AG04450 (cell line): ENCODE measurements at regions of chr22 and their contacts with region 1.

Region 1: DNA sequence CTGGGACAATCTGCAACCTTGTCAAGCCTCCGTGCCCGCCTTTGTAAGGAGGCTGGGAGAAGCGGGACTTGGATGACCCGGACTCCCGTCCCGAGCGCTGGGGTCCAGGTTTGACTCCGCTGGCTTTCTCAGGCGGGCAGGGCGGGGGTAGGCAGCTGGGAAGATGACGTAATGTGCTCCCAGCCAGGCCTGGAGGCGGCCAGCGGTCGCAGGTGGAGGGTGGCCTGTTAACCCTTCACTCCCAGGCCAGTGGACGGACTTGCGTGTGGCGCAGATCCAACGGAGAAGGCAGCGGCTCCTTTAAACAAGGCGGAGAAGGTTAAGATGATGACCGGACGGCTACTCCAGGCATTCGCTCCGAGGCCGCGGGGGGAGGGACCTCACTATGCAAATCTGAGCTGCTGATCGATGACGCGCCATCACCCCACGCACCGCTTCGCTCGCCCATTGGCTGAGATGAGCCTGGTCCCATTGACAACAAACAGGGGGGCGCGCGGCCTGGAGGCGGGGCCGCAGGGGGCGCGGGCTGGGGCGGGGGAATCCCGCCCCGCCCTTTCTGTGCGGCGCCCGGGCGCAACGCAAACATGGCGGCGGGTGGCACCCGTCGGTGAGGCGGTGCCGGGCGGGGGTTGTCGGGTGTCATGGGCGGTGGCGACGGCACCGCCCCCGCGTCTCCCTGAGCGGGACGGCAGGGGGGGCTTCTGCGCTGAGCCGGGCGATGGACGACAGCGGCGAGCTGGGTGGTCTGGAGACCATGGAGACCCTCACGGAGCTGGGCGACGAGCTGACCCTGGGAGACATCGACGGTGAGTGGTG is at the start of gene SREBF2:
- DNase-seq: peak; percentile 98
- H3K4me3 ChIP-seq: peak within 1 kb of the TSS; percentile 85
- H3K27ac ChIP-seq: peak within 1 kb of the TSS; percentile 90
- H3K27me3 ChIP-seq: no peaks in the 10 kb centered on the region
- CTCF ChIP-seq: no peak
- polyA plus RNA-seq, gene SREBF2: 31.7 and 39.1 TPM in 2 replicates

Region 2: GRCh38 chr22:41800348-41801146 is 32.2 kb before region 1 on chr22 and contains the start of gene CCDC134:
- CTCF ChIA-PET with region 1: no interaction called
- POLR2A ChIA-PET with region 1: interaction called, 11 read pairs
- DNase-seq: peak; percentile 30
- H3K4me3 ChIP-seq: peak within 1 kb of the TSS; percentile 98
- H3K27ac ChIP-seq: peak within 1 kb of the TSS; percentile 52
- H3K27me3 ChIP-seq: no peaks in the 10 kb centered on the region
- CTCF ChIP-seq: no peak
- polyA plus RNA-seq, gene CCDC134: 2.6 and 3.5 TPM in 2 replicates